ENCODE measurements at regions of chr10 and their contacts with region 1.

Region 1: GRCh38 chr10:72048450-72049124 is 39.8 kb downstream of the SPOCK2 start:
- DNase-seq: peak; percentile 92 to 95
- H3K4me3 ChIP-seq: no peak overlapping the region
- H3K27ac ChIP-seq: no peak overlapping the region
- H3K4me1 ChIP-seq: peaks cover 0 to 15% (median 9%) of the 10 kb centered on the region in 4 donors
- H3K27me3 ChIP-seq: no peaks in the 10 kb centered on the region
- CTCF ChIP-seq: peak; percentile 98 to 100

Region 2: GRCh38 chr10:71899665-71900412 is 148.7 kb before region 1 on chr10:
- intact Hi-C with region 1: loop called (anchors 5 kb)
- DNase-seq: no peak
- H3K4me3 ChIP-seq: no peak overlapping the region
- H3K27ac ChIP-seq: no peak overlapping the region
- H3K4me1 ChIP-seq: no peaks in the 10 kb centered on the region
- H3K27me3 ChIP-seq: no peaks in the 10 kb centered on the region
- CTCF ChIP-seq: no peak

Region 3: GRCh38 chr10:72334825-72335393 is 286.3 kb after region 1 on chr10:
- intact Hi-C with region 1: loop called (anchors 2 kb)
- DNase-seq: peak; percentile 88 to 98
- H3K4me3 ChIP-seq: peak overlapping the region in 1 of 2 donors; percentile 11
- H3K27ac ChIP-seq: peak overlapping the region; percentile 83 to 94
- H3K4me1 ChIP-seq: peaks cover 11 to 73% (median 67%) of the 10 kb centered on the region in 4 donors
- H3K27me3 ChIP-seq: no peaks in the 10 kb centered on the region
- CTCF ChIP-seq: peak in 1 of 2 experiments; percentile 5